B cell (primary cell): ENCODE measurements at regions of chr6 and their contacts with region 1.

Region 1: GRCh38 chr6:36360241-36361054 is 23.8 kb upstream of the BNIP5 start:
- DNase-seq: peak; percentile 82
- ATAC-seq: peak; percentile 83
- H3K4me3 ChIP-seq: no peak overlapping the region
- H3K4me3 Mint-ChIP-seq: no peak overlapping the region
- H3K27ac ChIP-seq: no peak overlapping the region
- H3K27ac Mint-ChIP-seq: no peak overlapping the region
- H3K4me1 ChIP-seq: peaks cover 20 to 33% of the 10 kb centered on the region in 2 donors
- H3K4me1 Mint-ChIP-seq: peaks cover 29% of the 10 kb centered on the region
- H3K27me3 ChIP-seq: no peaks in the 10 kb centered on the region
- H3K27me3 Mint-ChIP-seq: no peaks in the 10 kb centered on the region
- CTCF ChIP-seq: peak; percentile 83

Region 2: DNA sequence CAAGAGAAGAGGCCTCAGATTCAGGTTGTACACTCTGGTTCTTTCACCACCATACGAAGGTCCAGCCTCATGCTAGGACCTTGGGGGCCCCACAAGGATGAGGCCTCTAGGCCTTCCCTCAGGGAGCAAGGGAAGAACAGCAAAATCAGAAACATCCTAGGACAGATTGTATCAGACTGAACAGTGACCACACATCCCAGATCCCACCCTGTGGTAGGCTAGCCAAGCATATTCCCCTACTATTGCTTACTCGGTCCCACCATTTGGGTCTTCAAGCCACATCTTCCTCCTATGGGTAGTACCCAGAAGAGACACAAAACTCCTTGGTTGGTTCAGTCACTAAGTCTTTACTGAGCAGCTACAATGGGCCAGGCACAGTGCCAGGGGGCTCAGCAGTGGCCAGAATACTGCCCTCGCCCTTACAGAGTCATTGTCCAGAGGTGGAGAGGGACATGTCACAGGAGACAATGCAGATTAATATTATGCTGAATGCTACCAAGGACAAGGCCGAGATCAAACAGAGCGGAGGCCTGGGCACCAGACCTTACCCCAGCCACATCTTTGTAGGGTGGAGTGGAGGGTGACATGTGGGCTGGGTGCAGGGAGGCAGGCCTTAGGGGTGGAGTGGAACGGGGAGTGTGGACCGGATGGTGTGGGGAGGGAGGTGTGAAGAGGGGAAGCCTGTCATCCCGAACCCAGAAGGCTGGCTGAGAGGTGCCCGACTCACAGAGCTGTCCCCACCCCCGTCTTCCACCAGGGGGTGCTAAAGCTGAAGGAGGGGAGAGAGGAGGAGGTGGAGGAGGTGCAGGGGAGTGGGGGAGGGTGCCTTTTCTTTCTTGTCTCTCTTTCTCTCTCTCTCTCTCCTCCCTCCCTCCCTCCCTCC is 236.9 kb before region 1 on chr6:
- CTCF ChIA-PET with region 1: interaction called, 3 read pairs
- POLR2A ChIA-PET with region 1: no interaction called
- intact Hi-C with region 1: loop called (anchors 5 kb)
- DNase-seq: peak; percentile 88
- ATAC-seq: peak; percentile 74
- H3K4me3 ChIP-seq: no peak overlapping the region
- H3K4me3 Mint-ChIP-seq: peak overlapping the region; percentile 12
- H3K27ac ChIP-seq: peak overlapping the region; percentile 62 to 95
- H3K27ac Mint-ChIP-seq: peak overlapping the region; percentile 88
- H3K4me1 ChIP-seq: peaks cover 57 to 70% of the 10 kb centered on the region in 2 donors
- H3K4me1 Mint-ChIP-seq: peaks cover 69% of the 10 kb centered on the region
- H3K27me3 ChIP-seq: no peaks in the 10 kb centered on the region
- H3K27me3 Mint-ChIP-seq: no peaks in the 10 kb centered on the region
- CTCF ChIP-seq: peak; percentile 64

Region 3: GRCh38 chr6:36302227-36302976 is 58.0 kb before region 1 on chr6:
- CTCF ChIA-PET with region 1: interaction called, 149 read pairs
- POLR2A ChIA-PET with region 1: no interaction called
- intact Hi-C with region 1: loop called (anchors 1 kb)
- DNase-seq: peak; percentile 94
- ATAC-seq: peak; percentile 95
- H3K4me3 ChIP-seq: no peak overlapping the region
- H3K4me3 Mint-ChIP-seq: no peak overlapping the region
- H3K27ac ChIP-seq: no peak overlapping the region
- H3K27ac Mint-ChIP-seq: peak overlapping the region; percentile 57
- H3K4me1 ChIP-seq: no peaks in the 10 kb centered on the region
- H3K4me1 Mint-ChIP-seq: peaks cover 5% of the 10 kb centered on the region
- H3K27me3 ChIP-seq: peaks cover 0 to 6% (median 1%) of the 10 kb centered on the region in 4 experiments
- H3K27me3 Mint-ChIP-seq: peaks cover 23% of the 10 kb centered on the region
- CTCF ChIP-seq: peak; percentile 97

Region 4: DNA sequence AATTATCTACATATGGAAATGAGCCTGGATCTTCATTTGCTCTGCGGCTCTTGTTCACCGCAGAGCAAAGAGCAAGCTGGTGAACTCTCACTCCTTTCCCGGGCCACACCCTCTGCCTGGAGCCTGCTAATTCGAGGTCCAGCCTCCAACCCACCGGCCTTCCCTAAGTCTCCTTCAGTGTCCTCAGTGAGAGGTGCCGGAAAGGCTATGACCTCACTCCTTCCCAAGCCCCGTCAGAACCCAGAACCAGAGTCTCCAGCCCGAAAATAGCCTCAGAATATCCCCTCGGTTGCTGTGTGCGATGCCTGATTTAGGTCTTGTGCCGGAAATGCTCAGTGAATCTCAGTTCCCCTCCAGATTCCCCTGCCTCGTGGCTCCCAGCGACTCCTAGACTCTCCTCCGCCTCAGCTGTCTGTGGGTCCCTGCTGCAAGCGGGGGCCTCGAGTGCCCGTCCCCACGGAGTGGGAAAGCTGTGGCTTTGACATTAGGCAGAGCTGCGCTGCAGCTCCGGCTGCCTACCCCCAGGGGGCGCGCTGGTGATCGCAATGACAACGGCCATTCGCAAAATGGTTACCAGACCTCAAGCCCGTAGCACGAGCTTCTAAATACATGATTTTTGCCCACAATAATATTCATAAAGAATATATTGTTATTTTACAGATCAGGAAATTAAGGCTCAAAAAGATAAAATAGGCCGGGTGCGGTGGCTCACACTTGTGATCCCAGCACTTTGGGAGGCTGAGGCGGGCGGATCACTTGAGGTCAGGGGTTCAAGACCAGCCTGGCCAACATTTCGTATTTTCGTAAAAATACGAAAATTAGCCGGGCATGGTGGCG is 19.6 kb before region 1 on chr6:
- CTCF ChIA-PET with region 1: interaction called, 32 read pairs
- POLR2A ChIA-PET with region 1: no interaction called
- intact Hi-C with region 1: loop called (anchors 1 kb)
- DNase-seq: peak; percentile 77
- ATAC-seq: peak; percentile 84
- H3K4me3 ChIP-seq: peak overlapping the region in 3 of 5 experiments; percentile 11 to 43 (median 27)
- H3K4me3 Mint-ChIP-seq: peak overlapping the region; percentile 84
- H3K27ac ChIP-seq: no peak overlapping the region
- H3K27ac Mint-ChIP-seq: peak overlapping the region; percentile 70
- H3K4me1 ChIP-seq: peaks cover 15 to 26% of the 10 kb centered on the region in 2 donors
- H3K4me1 Mint-ChIP-seq: peaks cover 18% of the 10 kb centered on the region
- H3K27me3 ChIP-seq: peaks cover 0 to 7% (median 0%) of the 10 kb centered on the region in 4 experiments
- H3K27me3 Mint-ChIP-seq: peaks cover 15% of the 10 kb centered on the region
- CTCF ChIP-seq: peak; percentile 99

Region 5: GRCh38 chr6:36383606-36384005 is 23.2 kb after region 1 on chr6:
- CTCF ChIA-PET with region 1: interaction called, 13 read pairs
- POLR2A ChIA-PET with region 1: no interaction called
- intact Hi-C with region 1: no loop called
- DNase-seq: no peak
- ATAC-seq: no peak
- H3K4me3 ChIP-seq: no peak overlapping the region
- H3K4me3 Mint-ChIP-seq: no peak overlapping the region
- H3K27ac ChIP-seq: no peak overlapping the region
- H3K27ac Mint-ChIP-seq: no peak overlapping the region
- H3K4me1 ChIP-seq: peaks cover 20 to 33% of the 10 kb centered on the region in 2 donors
- H3K4me1 Mint-ChIP-seq: peaks cover 30% of the 10 kb centered on the region
- H3K27me3 ChIP-seq: peaks cover 0 to 22% (median 12%) of the 10 kb centered on the region in 4 experiments
- H3K27me3 Mint-ChIP-seq: peaks cover 30% of the 10 kb centered on the region
- CTCF ChIP-seq: no peak